ENCODE measurements at regions of chr6 and their contacts with region 1.

Region 1: GRCh38 chr6:26401987-26402658 is at the start of gene BTN3A1:
- DNase-seq: peak; percentile 61
- H3K4me3 Mint-ChIP-seq: peak within 1 kb of the TSS; percentile 94
- H3K27ac Mint-ChIP-seq: peak within 1 kb of the TSS; percentile 97
- H3K4me1 Mint-ChIP-seq: peaks cover 56% of the 10 kb centered on the region
- H3K27me3 Mint-ChIP-seq: no peaks in the 10 kb centered on the region
- total RNA-seq, gene BTN3A1: 28.2 and 30.6 TPM in 2 replicates

Region 2: GRCh38 chr6:26363882-26364701 is 38.0 kb before region 1 on chr6:
- intact Hi-C with region 1: loop called (anchors 1 kb)
- DNase-seq: peak; percentile 10
- H3K4me3 Mint-ChIP-seq: no peak overlapping the region
- H3K27ac Mint-ChIP-seq: no peak overlapping the region
- H3K4me1 Mint-ChIP-seq: peaks cover 45% of the 10 kb centered on the region
- H3K27me3 Mint-ChIP-seq: no peaks in the 10 kb centered on the region

Region 3: GRCh38 chr6:26383624-26384417 is 18.3 kb before region 1 on chr6:
- intact Hi-C with region 1: loop called (anchors 1 kb)
- DNase-seq: no peak
- H3K4me3 Mint-ChIP-seq: peak overlapping the region; percentile 95
- H3K27ac Mint-ChIP-seq: peak overlapping the region; percentile 90
- H3K4me1 Mint-ChIP-seq: peaks cover 57% of the 10 kb centered on the region
- H3K27me3 Mint-ChIP-seq: no peaks in the 10 kb centered on the region

Region 4: DNA sequence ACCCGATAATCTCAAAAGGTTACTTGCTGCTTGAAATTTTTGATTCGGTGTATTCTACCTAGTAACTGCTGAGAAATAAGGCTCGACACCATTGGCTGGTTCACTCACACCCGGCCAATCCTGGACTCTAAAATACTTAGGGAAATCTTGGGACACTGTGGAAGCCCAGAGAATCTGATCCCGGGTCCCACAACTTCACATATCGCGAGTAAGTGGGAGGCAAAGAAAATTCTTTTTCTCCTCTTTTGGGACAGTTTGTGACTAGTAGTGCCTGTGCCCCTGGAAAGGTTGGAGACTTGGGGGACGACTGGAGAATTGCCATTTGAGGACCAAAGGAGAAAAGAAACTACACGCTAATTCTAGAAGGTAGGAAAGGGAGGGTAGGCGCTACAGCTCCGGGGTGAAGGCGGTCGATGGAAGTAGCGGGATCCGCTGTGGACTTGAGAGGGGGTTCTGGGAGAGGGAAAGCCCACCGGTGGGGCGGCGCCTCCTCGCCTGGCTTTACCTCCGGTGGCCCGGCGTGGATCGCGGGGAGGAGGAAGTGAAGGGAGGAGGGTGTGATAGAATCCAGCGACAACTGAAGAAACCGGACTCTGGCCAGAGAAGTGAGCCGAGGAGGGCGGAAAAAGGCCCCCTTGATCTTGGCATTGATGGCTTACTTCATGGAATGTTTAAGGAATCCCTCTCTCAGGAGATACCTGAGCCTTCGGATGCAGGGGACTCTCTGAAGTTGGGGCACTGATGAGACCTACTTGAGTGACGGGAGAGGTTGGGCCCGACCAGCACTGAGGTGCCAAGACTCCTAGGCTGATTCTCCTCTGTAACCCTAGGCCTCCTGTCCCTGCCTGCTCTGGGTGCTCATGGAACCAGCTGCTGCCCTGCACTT is 19.4 kb after region 1 on chr6:
- intact Hi-C with region 1: loop called (anchors 1 kb)
- DNase-seq: peak; percentile 37
- H3K4me3 Mint-ChIP-seq: no peak overlapping the region
- H3K27ac Mint-ChIP-seq: no peak overlapping the region
- H3K4me1 Mint-ChIP-seq: peaks cover 4% of the 10 kb centered on the region
- H3K27me3 Mint-ChIP-seq: no peaks in the 10 kb centered on the region